ENCODE measurements at regions of chr11 and their contacts with region 1.

Region 1: GRCh38 chr11:78139422-78140391 is at the start of gene ALG8:
- DNase-seq: peak; percentile 93
- ATAC-seq: peak; percentile 98
- H3K4me3 ChIP-seq: peak within 1 kb of the TSS; percentile 72 to 84 (median 75)
- H3K27ac ChIP-seq: peak within 1 kb of the TSS; percentile 81
- H3K4me1 ChIP-seq: peaks cover 54% of the 10 kb centered on the region
- H3K27me3 ChIP-seq: no peaks in the 10 kb centered on the region; a peak in 1 of 5 replicates
- CTCF ChIP-seq: no peak
- EP300 ChIP-seq: 0 out of 4 replicates have a peak, but pooled peaks of 1 of the 2 experiments have one; percentile 14
- POLR2A ChIP-seq: peak; percentile 83 to 90
- RAD21 ChIP-seq: no peak; the same call in none of the 2 replicates
- total RNA-seq, gene ALG8: 50.0 and 88.0 TPM in 2 replicates

Region 2: GRCh38 chr11:77865805-77866204 is 273.9 kb before region 1 on chr11:
- CTCF ChIA-PET with region 1: no interaction called
- POLR2A ChIA-PET with region 1: no interaction called
- in situ Hi-C with region 1: no loop called
- intact Hi-C with region 1: no loop called
- DNase-seq: no peak
- ATAC-seq: no peak
- H3K4me3 ChIP-seq: no peak overlapping the region
- H3K27ac ChIP-seq: no peak overlapping the region
- H3K4me1 ChIP-seq: no peaks in the 10 kb centered on the region
- H3K27me3 ChIP-seq: no peaks in the 10 kb centered on the region
- CTCF ChIP-seq: no peak
- EP300 ChIP-seq: no peak
- POLR2A ChIP-seq: no peak
- RAD21 ChIP-seq: no peak

Region 3: GRCh38 chr11:77994412-77995362 is 145.0 kb before region 1 on chr11 and contains the start of gene INTS4:
- CTCF ChIA-PET with region 1: no interaction called
- POLR2A ChIA-PET with region 1: interaction called, 11 read pairs
- in situ Hi-C with region 1: no loop called
- intact Hi-C with region 1: no loop called
- DNase-seq: peak; percentile 99
- ATAC-seq: peak; percentile 98
- H3K4me3 ChIP-seq: peak within 1 kb of the TSS; percentile 82 to 99 (median 83)
- H3K27ac ChIP-seq: peak within 1 kb of the TSS; percentile 77
- H3K4me1 ChIP-seq: peaks cover 22% of the 10 kb centered on the region
- H3K27me3 ChIP-seq: no peaks in the 10 kb centered on the region; a peak in 1 of 5 replicates
- CTCF ChIP-seq: no peak; the same call in 1 of the 2 replicates
- EP300 ChIP-seq: no peak
- POLR2A ChIP-seq: peak; percentile 57 to 75
- RAD21 ChIP-seq: peak; percentile 20; the same call in 1 of the 2 replicates
- total RNA-seq, gene INTS4: 29.6 and 37.3 TPM in 2 replicates

Region 4: DNA sequence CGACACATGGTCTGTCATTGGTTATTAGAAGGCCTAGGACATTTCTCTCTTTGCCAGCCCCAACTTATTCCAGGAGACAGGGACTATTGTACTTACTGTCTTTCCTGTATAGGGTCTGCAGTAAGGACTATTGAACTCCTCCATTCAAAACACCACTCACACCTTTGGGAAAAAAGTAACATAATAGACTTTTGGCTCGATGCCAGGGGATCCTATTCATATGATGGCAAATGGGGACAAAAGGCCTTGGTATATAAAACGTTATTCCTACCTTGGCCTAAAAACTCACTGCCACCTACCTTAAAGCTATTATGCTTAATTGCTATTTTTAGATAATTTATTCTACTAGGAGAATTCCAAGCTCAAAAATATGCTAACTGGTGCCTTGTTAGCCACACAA is 53.7 kb before region 1 on chr11:
- CTCF ChIA-PET with region 1: no interaction called
- POLR2A ChIA-PET with region 1: interaction called, 21 read pairs
- in situ Hi-C with region 1: no loop called
- intact Hi-C with region 1: no loop called
- DNase-seq: peak; percentile 34
- ATAC-seq: no peak
- H3K4me3 ChIP-seq: no peak overlapping the region
- H3K27ac ChIP-seq: peak overlapping the region; percentile 73
- H3K4me1 ChIP-seq: peaks cover 68% of the 10 kb centered on the region
- H3K27me3 ChIP-seq: no peaks in the 10 kb centered on the region
- CTCF ChIP-seq: no peak
- EP300 ChIP-seq: no peak
- POLR2A ChIP-seq: no peak
- RAD21 ChIP-seq: no peak

Region 5: DNA sequence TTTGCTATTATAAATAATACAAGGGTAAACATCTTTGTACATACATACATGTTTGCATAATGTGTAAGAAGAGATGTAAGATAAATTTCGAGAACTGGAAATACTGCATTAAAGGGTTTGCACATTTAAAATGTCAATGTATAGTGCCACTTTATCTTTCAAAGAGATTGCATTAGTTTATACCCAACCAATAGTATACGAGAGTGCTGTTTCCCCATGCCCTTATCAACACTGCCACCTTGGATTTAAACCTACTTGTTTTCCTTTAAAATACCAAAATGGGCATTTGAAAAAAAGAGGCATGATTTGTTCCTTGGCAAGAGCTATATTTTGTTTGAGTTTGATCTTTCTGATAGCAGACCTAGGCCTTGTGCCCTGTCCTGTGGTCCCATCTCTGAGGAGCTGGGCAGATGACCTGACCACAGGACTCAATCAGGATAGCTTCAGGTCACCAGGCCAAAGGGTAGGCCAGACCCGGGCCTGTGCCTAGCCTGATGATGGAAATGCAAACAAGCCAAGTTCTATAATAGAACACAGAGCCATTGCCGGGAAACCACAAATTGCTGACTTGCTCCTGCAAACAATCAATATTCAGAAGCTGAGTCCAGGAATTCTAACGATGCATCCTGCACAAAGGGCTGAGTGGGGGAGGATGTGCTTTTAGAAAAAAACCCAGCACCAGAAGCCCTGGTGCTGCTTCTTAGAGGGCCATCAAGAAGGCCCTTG is 16.6 kb after region 1 on chr11:
- CTCF ChIA-PET with region 1: no interaction called
- POLR2A ChIA-PET with region 1: interaction called, 27 read pairs
- in situ Hi-C with region 1: no loop called
- intact Hi-C with region 1: no loop called
- DNase-seq: peak; percentile 95
- ATAC-seq: peak; percentile 98
- H3K4me3 ChIP-seq: peak overlapping the region in 1 of 3 experiments; percentile 45; a peak in 2 of 6 replicates
- H3K27ac ChIP-seq: peak overlapping the region; percentile 84
- H3K4me1 ChIP-seq: peaks cover 56% of the 10 kb centered on the region
- H3K27me3 ChIP-seq: no peaks in the 10 kb centered on the region
- CTCF ChIP-seq: 0 out of 2 replicates have a peak, but pooled peaks have one; percentile 5
- EP300 ChIP-seq: peak; percentile 58 to 95; a peak in 3 of 4 replicates
- POLR2A ChIP-seq: no peak
- RAD21 ChIP-seq: peak; percentile 24; the same call in 1 of the 2 replicates

Region 6: GRCh38 chr11:78188286-78189173 is 48.8 kb after region 1 on chr11 and contains the starts of genes KCTD21 and USP35:
- CTCF ChIA-PET with region 1: no interaction called
- POLR2A ChIA-PET with region 1: interaction called, 37 read pairs
- in situ Hi-C with region 1: loop called (anchors 5 kb)
- intact Hi-C with region 1: loop called (anchors 1 kb)
- DNase-seq: peak; percentile 92
- ATAC-seq: peak; percentile 93
- H3K4me3 ChIP-seq: peak within 1 kb of the TSS; percentile 78 to 96 (median 86)
- H3K27ac ChIP-seq: peak within 1 kb of the TSS; percentile 47
- H3K4me1 ChIP-seq: peaks cover 78% of the 10 kb centered on the region
- H3K27me3 ChIP-seq: no peaks in the 10 kb centered on the region; a peak in 1 of 5 replicates
- CTCF ChIP-seq: peak; percentile 9; the same call in 1 of the 2 replicates
- EP300 ChIP-seq: peak in 1 of 2 experiments; percentile 19; a peak in 2 of 4 replicates
- POLR2A ChIP-seq: peak in 1 of 2 experiments; percentile 85; a peak in 2 of 4 replicates
- RAD21 ChIP-seq: 0 out of 2 replicates have a peak, but pooled peaks have one; percentile 13
- total RNA-seq, gene KCTD21: 3.1 and 3.9 TPM in 2 replicates
- total RNA-seq, gene USP35: 1.8 and 4.6 TPM in 2 replicates

Measured in HepG2 (cell line).